Posterior cingulate gyrus (tissue), 11 donors: ENCODE measurements at regions of chr10 and their contacts with region 1.

Region 1: DNA sequence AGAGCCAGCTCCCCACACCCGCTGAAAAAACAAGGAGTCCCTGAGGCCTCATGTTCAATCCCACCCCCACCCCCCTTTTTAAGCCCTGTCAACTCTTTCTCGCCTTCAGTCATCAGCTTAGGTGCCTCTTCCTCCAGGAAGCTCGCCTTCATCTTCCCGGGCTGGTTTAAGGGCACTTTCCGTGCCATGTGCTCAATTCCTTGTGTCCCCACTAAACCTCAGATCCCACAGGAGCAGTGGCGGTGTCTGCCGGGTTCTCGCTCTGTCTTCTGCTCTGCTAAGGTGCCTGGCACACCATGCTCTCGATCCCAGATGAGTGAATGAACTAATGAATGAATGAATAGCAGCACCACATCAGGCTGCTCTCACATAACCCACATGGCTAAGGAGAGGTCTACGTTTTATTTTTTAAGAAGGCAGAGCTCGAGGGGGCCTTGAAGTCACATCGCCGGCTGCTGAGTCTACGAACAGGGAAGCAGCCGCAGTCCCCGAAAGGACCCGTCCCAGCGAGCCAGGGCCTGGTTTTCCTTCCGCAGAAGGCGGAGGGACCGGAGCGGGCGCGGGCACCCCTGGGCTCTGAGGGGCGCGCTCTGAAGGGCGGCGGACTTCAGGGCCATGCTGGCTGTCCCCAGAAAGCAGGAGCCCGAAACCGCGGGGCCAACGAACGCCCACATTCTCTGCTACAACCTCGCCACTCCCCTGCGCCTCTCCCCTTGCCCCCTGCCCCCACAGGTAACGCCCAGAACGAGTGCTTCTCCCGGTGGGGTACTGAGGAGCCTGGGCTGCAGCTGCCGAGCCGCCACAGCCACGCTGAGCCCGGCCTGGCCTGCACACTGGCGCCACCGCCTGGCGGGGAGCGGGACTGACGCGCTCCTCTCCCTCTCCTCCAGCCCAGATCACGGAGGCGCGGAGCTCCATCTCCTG is 73.4 kb upstream of the KCNMA1 start:
- DNase-seq: peak; percentile 53 to 96 (median 80)

Region 2: GRCh38 chr10:77574438-77574837 is 136.6 kb before region 1 on chr10:
- intact Hi-C with region 1: loop called (anchors 5 kb)
- DNase-seq: no peak